Astrocyte of the cerebellum (primary cell): ENCODE measurements at regions of chr16 and their contacts with region 1.

Region 1: GRCh38 chr16:9457215-9457614 is 365.8 kb downstream of the HAPSTR1 start:
- DNase-seq: no peak
- H3K4me3 ChIP-seq: no peak overlapping the region
- CTCF ChIP-seq: no peak

Region 2: GRCh38 chr16:9534759-9535158 is 77.5 kb after region 1 on chr16:
- in situ Hi-C with region 1: loop called (anchors 5 kb)
- DNase-seq: no peak
- H3K4me3 ChIP-seq: no peak overlapping the region
- CTCF ChIP-seq: no peak

Region 3: DNA sequence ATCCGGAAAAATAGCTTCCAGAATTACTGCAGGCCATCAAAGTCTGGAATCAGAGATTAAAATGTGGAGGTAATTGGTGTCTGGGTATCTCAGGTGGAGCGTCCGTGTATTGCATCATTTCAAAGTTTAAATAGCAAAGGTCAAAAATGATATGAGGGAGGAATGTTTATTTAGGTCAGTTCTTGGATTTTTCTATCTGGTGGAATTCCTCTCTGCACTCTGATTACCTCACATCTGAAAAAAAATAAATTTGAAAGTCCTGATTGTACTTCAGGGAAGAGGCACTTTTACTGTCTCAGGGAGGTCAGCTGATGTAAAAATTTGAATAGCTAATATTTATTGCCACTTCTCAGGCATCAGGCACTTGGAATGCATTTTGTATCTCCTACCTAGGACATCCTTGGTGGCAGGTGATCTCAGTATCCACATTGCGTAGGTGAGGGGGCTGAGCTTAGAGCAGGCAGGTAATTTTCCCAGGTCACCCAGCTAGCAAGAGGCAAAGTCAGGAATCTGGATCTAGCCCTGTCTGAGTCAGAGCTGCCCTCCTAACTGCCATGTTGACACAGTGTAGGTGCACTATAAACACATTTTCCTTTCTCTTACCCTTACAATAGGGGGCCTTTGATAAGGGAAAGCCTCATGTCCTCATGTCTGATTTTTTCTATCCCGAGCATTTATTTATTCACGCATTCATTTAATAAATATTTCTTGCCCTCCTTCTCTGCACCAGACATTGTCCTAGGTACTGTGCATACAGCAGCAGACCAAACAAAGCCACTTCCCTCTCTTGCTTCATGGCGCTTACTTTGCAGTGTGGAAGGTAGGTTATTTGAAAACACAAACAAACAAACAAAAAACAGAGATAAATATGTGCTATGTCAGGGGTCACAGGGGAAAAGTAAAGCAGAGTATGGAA is 88.6 kb after region 1 on chr16:
- in situ Hi-C with region 1: no loop called
- DNase-seq: no peak
- H3K4me3 ChIP-seq: no peak overlapping the region
- CTCF ChIP-seq: no peak